Activated B cell treated with CpG ODN at 0.5 μM for 24 hours (primary cell): ENCODE measurements at regions of chr4 and their contacts with region 1.

Region 1: GRCh38 chr4:1289207-1290164 is at the start of gene MAEA:
- DNase-seq: peak; percentile 95
- ATAC-seq: peak; percentile 96
- H3K4me3 Mint-ChIP-seq: peak within 1 kb of the TSS; percentile 90
- H3K27ac Mint-ChIP-seq: peak within 1 kb of the TSS; percentile 81
- H3K4me1 Mint-ChIP-seq: peaks cover 44% of the 10 kb centered on the region
- H3K27me3 Mint-ChIP-seq: no peaks in the 10 kb centered on the region
- CTCF ChIP-seq: no peak
- total RNA-seq, gene MAEA: 67.3 and 73.7 TPM in 2 replicates

Region 2: DNA sequence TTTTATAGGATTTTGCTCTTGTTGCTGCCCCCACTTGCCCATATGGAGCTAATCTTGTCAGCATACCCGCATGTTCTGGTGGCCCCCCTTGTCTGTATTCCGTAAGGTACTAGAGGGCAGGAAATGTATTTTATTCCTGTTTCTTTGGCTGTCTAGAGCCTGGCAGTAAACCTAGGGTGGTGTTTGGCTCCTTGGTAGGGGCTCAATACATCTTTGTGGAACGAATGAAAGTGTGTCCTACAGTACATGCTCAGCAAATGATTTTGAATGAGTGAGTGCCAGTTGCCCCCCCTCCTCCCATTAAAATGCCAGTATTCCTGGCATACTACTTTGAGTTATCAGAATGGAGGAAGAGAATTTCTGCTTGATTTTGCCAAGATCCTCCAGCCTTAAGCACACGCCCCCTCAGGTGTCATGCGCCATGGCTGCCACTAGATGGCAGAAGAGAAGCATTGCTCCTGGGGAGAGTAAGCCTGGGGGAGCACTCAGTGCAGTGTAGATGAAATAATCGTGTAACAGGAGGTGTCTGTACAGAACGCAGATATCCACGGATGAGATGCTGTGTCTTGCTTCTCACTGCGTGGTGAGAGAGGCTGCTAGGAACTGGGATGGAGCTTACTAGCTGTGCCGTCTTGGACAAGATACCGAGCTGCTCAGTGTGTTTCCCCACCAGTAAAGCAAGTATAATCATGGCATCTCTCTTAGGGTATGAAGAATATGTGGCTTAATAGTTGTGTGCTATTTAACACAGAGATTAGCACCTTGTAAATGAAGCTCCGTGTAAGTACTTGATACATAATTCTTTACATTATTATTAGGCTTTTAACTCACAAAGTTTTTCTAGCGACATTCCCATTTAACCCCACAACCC is 158.9 kb before region 1 on chr4:
- CTCF ChIA-PET with region 1: no interaction called
- POLR2A ChIA-PET with region 1: no interaction called
- intact Hi-C with region 1: loop called (anchors 1 kb)
- DNase-seq: peak; percentile 63
- ATAC-seq: peak; percentile 99
- H3K4me3 Mint-ChIP-seq: no peak overlapping the region
- H3K27ac Mint-ChIP-seq: peak overlapping the region; percentile 19
- H3K4me1 Mint-ChIP-seq: peaks cover 21% of the 10 kb centered on the region
- H3K27me3 Mint-ChIP-seq: peaks cover 2% of the 10 kb centered on the region
- CTCF ChIP-seq: peak; percentile 99

Region 3: DNA sequence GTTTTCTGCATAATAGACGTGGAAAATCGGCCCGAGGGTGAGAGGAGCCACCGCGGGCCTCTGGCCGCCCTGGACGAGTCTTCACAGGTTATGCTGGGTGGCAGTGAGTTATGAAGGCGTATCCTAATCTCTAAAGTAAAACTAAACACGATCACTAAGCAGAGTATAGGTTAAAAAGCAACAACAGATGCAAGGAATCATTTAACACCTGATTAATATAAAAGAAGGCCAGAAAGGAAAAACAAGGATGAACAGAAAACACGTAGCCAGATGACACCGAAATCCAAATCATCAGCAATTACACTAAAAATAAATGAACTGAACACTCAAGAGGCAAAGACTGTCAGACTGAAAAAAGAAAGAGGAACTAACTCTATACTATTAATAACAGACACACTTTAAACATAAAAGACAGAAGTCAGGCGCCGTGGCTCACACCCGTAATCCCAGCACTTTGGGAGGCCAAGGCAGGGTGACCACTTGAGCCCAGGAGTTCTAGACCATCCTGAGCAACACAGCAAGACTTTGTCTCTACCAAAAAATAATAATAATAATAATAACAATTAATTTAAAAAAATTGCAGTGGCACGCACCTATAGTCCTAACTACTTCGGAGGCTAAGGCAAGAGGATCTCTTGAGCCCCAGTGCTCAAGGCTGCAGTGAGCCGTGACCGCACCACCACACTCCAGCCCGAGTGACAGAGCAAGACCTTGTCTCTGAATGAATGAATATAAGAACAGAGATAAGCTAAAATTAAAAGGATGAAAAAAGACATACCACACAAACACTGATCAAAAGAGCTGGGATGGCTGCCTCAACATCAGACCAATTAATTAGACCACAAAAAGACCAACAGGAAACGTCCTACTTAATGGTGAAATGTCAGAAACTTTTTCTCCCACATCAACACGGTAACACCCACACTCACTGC is 70.6 kb before region 1 on chr4:
- CTCF ChIA-PET with region 1: no interaction called
- POLR2A ChIA-PET with region 1: interaction called, 4 read pairs
- intact Hi-C with region 1: loop called (anchors 1 kb)
- DNase-seq: peak; percentile 41
- ATAC-seq: peak; percentile 88
- H3K4me3 Mint-ChIP-seq: peak overlapping the region; percentile 75
- H3K27ac Mint-ChIP-seq: peak overlapping the region; percentile 81
- H3K4me1 Mint-ChIP-seq: peaks cover 64% of the 10 kb centered on the region
- H3K27me3 Mint-ChIP-seq: no peaks in the 10 kb centered on the region
- CTCF ChIP-seq: no peak

Region 4: DNA sequence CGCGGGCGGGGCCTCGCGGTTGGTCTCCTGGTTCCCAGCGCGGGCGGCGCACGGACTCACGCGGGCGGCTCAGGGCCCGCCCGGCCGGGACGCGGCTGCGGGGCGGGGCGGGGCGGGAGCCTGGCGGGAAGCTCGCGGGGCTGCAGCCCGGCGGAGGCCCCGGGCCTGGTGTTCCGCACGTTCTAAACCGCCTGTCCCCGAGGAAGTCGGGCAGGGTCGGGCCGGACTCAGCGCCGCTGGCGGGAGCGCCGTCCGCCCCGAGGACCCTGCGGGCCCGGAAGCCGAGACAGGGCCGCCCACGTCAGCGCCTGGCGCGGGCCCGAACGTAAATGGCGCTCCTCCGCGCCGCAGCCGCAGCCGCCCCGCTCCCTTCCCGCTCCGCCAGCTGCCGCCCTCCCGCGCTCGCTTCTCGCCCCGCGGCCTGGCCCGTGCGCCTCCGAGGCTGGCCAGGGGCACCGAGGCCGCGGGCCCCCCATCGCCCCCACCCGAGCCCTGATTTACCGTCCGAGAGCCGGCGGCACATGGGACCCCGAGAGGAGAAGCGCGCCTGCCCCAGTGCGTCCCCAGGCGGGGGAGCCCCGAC is 40.2 kb before region 1 on chr4:
- CTCF ChIA-PET with region 1: interaction called, 3 read pairs
- POLR2A ChIA-PET with region 1: interaction called, 32 read pairs
- intact Hi-C with region 1: loop called (anchors 5 kb)
- DNase-seq: peak; percentile 87
- ATAC-seq: peak; percentile 70
- H3K4me3 Mint-ChIP-seq: peak overlapping the region; percentile 88
- H3K27ac Mint-ChIP-seq: peak overlapping the region; percentile 93
- H3K4me1 Mint-ChIP-seq: peaks cover 59% of the 10 kb centered on the region
- H3K27me3 Mint-ChIP-seq: no peaks in the 10 kb centered on the region
- CTCF ChIP-seq: no peak

Region 5: GRCh38 chr4:1266881-1267763 is 22.4 kb before region 1 on chr4:
- CTCF ChIA-PET with region 1: interaction called, 4 read pairs
- POLR2A ChIA-PET with region 1: interaction called, 8 read pairs
- intact Hi-C with region 1: loop called (anchors 1 kb)
- DNase-seq: no peak
- ATAC-seq: peak; percentile 61
- H3K4me3 Mint-ChIP-seq: peak overlapping the region; percentile 84
- H3K27ac Mint-ChIP-seq: peak overlapping the region; percentile 89
- H3K4me1 Mint-ChIP-seq: peaks cover 31% of the 10 kb centered on the region
- H3K27me3 Mint-ChIP-seq: no peaks in the 10 kb centered on the region
- CTCF ChIP-seq: no peak

Region 6: DNA sequence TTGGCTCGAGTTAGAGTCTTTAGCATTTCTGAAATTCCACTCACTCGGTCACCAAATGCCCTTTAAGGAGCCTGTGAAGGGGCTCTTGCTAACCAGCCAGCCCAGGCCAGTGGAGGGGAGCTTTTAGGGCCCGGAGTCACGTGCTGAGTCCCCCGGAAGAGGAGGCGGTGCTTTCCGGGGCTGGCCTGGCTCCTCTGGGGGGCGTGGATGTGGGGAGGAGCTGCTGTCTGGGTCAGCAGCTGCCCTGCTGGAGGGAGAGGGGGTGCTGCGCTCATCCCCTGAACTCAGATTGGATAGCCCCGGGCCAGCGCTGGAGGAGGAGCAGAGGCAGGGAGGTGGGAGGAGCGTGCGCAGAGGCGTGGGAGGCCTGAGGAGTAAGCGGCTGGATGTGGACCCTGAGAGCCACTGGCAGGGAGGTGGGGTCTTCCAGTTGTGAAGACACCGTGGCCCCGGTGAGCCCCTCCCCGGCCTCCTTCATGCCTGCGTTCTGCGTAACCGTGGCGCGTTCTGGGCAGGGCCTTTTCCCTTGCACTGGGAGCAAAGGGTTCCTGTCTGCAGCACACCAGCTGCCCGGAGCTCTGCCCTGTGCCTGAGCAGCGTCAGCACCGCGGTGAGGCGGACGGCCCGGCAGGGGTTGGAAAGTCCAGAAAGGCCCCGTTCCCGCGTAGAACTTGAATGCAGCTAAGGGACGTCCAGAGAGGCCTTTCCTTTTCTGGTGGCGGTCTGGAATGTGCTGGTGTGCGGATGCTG is 19.9 kb after region 1 on chr4:
- CTCF ChIA-PET with region 1: no interaction called
- POLR2A ChIA-PET with region 1: interaction called, 12 read pairs
- intact Hi-C with region 1: loop called (anchors 2 kb)
- DNase-seq: peak; percentile 29
- ATAC-seq: peak; percentile 86
- H3K4me3 Mint-ChIP-seq: peak overlapping the region; percentile 73
- H3K27ac Mint-ChIP-seq: no peak overlapping the region
- H3K4me1 Mint-ChIP-seq: peaks cover 51% of the 10 kb centered on the region
- H3K27me3 Mint-ChIP-seq: no peaks in the 10 kb centered on the region
- CTCF ChIP-seq: no peak